ENCODE measurements at regions of chr12 and their contacts with region 1.

Region 1: GRCh38 chr12:41486718-41487117 is 298.6 kb downstream of the PDZRN4 start:
- DNase-seq: no peak
- H3K4me3 ChIP-seq: no peak overlapping the region
- H3K27ac ChIP-seq: no peak overlapping the region
- H3K4me1 ChIP-seq: no peaks in the 10 kb centered on the region
- CTCF ChIP-seq: no peak

Region 2: DNA sequence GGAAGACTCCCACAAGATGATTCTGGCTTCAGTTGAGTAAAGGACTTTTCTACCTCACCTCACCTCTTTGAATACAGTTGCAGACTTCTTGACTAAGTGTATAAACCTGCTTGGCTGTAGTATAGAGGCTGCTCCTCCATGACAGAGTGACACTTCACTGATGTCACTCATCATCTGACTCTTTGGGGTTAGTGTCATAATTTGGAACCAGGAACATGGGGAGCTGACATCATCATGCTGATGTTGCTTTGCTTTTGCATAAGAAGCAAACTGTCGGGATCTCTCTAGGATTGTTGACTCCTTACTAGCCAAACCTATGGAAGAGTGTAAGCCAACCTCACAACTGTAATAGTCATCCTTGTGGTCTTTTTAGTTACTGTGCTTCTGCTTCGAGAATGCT is 373.8 kb before region 1 on chr12:
- CTCF ChIA-PET with region 1: no interaction called
- POLR2A ChIA-PET with region 1: no interaction called
- intact Hi-C with region 1: no loop called
- DNase-seq: no peak
- H3K4me3 ChIP-seq: no peak overlapping the region
- H3K27ac ChIP-seq: no peak overlapping the region
- H3K4me1 ChIP-seq: no peaks in the 10 kb centered on the region
- CTCF ChIP-seq: no peak

Region 3: GRCh38 chr12:41356181-41356580 is 130.5 kb before region 1 on chr12:
- CTCF ChIA-PET with region 1: no interaction called
- POLR2A ChIA-PET with region 1: no interaction called
- intact Hi-C with region 1: no loop called
- DNase-seq: no peak
- H3K4me3 ChIP-seq: no peak overlapping the region
- H3K27ac ChIP-seq: no peak overlapping the region
- H3K4me1 ChIP-seq: no peaks in the 10 kb centered on the region
- CTCF ChIP-seq: no peak

Region 4: DNA sequence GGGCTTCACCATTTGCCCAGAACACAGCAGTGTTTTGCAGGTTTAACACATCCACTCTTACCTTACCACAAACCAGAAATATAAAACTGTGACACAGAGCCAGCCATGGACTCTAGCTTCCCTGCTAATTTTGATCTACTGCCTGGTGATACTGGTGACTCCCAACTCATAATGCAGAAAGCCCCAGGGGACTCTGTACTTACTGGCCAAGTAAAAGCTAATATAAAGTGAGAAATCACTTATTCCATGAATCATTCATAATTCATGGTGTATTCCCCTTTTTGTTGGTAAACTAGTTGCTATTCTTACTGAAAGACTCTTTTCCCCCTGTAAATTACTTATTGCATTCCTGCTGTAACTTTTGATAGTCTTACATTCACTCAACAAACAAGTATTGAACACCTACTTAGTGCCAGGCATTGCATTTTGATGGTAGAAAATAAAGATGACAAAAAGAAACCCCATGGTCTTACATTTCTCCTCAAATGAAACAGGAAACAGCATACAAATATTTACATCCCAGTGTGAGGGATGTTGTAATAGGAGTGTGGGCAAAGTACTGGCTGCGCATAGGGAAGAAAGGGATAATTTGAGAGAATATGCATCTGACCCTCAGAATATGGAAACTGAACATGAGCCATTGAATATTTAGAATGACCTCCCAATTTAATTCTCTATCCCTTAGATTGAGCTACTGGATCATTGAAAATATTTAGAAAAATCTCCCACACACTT is 19.0 kb before region 1 on chr12:
- CTCF ChIA-PET with region 1: no interaction called
- POLR2A ChIA-PET with region 1: interaction called, 3 read pairs
- intact Hi-C with region 1: loop called (anchors 2 kb)
- DNase-seq: no peak
- H3K4me3 ChIP-seq: no peak overlapping the region
- H3K27ac ChIP-seq: no peak overlapping the region
- H3K4me1 ChIP-seq: peaks cover 14% of the 10 kb centered on the region
- CTCF ChIP-seq: no peak

Measured in OCI-LY7 (cell line).